ENCODE measurements at regions of chr3 and their contacts with region 1.

Region 1: GRCh38 chr3:112111785-112112402 is 21.2 kb downstream of the GCSAM start:
- DNase-seq: peak; percentile 65
- CTCF ChIP-seq: peak; percentile 82

Region 2: DNA sequence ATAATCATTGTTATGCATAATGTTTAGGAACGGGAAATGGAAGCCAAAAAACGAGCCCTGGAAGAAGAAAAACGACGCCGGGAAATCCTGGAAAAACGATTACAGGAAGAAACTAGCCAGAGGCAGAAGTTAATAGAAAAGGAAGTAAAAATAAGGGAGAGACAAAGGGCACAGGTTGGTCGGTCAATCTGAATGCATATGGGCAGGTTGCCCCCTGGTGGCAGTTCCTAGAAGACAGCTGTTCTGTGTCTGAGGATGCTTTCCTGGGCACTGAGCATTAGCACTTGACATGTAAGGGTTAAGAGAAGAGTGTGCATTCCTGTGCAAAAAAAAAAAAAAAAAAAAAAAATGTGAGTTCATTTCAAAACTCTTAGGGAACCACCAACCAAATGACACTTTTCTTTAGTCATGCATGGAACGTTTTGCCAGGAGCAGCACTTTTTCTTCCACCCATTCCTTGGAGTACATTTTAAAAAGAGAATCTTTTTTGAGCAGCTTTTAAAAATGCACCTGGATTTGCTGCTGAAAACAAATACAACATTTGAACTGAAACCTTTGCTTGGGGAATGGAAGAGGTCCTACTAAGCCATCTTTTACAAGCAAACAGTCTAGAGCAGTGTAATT is 144.1 kb before region 1 on chr3:
- in situ Hi-C with region 1: no loop called
- DNase-seq: peak; percentile 36
- CTCF ChIP-seq: peak; percentile 83

Region 3: DNA sequence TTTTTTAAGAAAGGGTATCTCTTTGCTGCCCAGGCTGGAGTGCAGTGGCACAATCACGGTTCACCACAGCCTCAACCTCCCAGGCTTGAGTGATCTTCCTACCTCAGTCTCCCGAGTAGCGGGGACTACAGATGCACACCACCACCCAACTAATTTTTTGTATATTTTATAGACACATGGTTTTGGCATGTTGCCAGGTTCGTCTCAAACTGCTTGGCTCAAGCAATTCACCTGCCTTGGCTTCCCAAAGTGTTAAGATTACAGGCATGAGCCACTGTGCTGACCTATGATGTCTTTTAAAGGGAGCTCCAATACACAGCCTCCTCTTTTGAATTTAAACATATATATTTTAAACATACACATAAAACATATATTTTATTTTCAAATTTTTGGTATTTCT is 121.2 kb after region 1 on chr3:
- in situ Hi-C with region 1: no loop called
- DNase-seq: no peak
- CTCF ChIP-seq: no peak

Region 4: GRCh38 chr3:112990672-112991602 is 879.0 kb after region 1 on chr3 and contains the start of gene GTPBP8:
- in situ Hi-C with region 1: loop called (anchors 25 kb)
- DNase-seq: peak; percentile 77
- CTCF ChIP-seq: no peak

Region 5: DNA sequence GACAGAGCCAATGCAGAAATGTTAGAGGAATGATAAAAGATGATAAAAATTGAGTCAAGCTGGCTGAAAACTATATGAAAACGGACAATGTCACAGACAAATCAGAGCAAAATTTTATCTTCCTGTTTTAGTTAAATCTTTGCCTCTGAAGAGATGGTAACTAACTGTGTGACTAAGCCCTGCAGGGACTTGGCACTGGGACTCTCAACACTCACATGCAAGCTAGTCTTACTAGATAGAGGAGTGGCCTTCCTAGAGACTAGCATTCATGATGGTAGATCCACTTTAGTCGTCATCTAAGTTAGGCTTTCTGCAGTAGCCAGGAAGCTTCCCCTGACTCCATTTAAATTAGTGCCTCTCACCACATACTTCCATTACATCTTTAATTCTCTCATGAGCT is 1940.3 kb after region 1 on chr3:
- in situ Hi-C with region 1: no loop called
- DNase-seq: no peak
- CTCF ChIP-seq: no peak